Heart right ventricle (tissue), 16 donors: ENCODE measurements at regions of chr12 and their contacts with region 1.

Region 1: GRCh38 chr12:26629864-26630263 is 203.1 kb downstream of the ITPR2 start:
- DNase-seq: no peak
- ATAC-seq: no peak
- H3K4me3 ChIP-seq: no peak overlapping the region
- H3K27ac ChIP-seq: no peak overlapping the region
- H3K4me1 ChIP-seq: peaks cover 0 to 15% (median 6%) of the 10 kb centered on the region in 9 donors
- H3K27me3 ChIP-seq: no peaks in the 10 kb centered on the region
- CTCF ChIP-seq: peak in 5 of 9 donors; percentile 15 to 38 (median 30)

Region 2: GRCh38 chr12:26113853-26114719 is 515.8 kb before region 1 on chr12:
- intact Hi-C with region 1: loop called in 1 of 10 experiments (anchors 10 kb)
- DNase-seq: peak; percentile 94 to 96
- ATAC-seq: peak; percentile 90 to 98 (median 93)
- H3K4me3 ChIP-seq: peak overlapping the region; percentile 0 to 59 (median 52)
- H3K27ac ChIP-seq: peak overlapping the region; percentile 79 to 96 (median 93)
- H3K4me1 ChIP-seq: peaks cover 3 to 54% (median 25%) of the 10 kb centered on the region in 9 donors
- H3K27me3 ChIP-seq: peaks cover 0 to 9% (median 0%) of the 10 kb centered on the region in 7 donors
- CTCF ChIP-seq: peak in 6 of 9 donors; percentile 5 to 42 (median 28)

Region 3: DNA sequence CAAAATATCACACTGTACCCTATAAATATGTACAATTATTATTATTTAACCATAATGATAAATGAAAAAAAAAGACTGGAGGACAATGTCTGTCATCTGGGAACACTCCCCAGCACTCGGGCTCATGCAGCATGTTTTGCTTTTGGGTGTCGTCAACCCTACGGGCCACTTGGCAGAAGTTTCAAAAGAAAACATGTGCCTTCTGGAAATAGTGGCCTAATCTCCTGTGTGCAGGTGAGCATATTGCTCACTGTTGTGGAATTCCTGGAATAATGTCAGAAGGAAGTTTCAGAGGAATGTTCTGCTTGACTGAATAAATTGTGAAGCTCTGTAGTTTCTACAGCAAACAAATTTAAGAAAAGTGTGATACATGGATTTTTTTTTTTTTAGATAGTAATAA is 136.2 kb before region 1 on chr12:
- intact Hi-C with region 1: no loop called
- DNase-seq: no peak
- ATAC-seq: no peak
- H3K4me3 ChIP-seq: no peak overlapping the region
- H3K27ac ChIP-seq: no peak overlapping the region
- H3K4me1 ChIP-seq: peaks cover 0 to 5% (median 0%) of the 10 kb centered on the region in 9 donors
- H3K27me3 ChIP-seq: no peaks in the 10 kb centered on the region
- CTCF ChIP-seq: no peak

Region 4: GRCh38 chr12:26713885-26714383 is 84.1 kb after region 1 on chr12:
- intact Hi-C with region 1: no loop called
- DNase-seq: no peak
- ATAC-seq: no peak
- H3K4me3 ChIP-seq: no peak overlapping the region
- H3K27ac ChIP-seq: no peak overlapping the region
- H3K4me1 ChIP-seq: no peaks in the 10 kb centered on the region
- H3K27me3 ChIP-seq: no peaks in the 10 kb centered on the region
- CTCF ChIP-seq: no peak